Activated CD8-positive, alpha-beta memory T cell treated with anti-CD3 and anti-CD28 coated beads, Interleukin-2, amount 10 ng/mL, durations not matched to agents 7 days and 5 days (primary cell): ENCODE measurements at regions of chr20 and their contacts with region 1.

Region 1: GRCh38 chr20:35463455-35464300 is 8.3 kb downstream of the CEP250 start:
- DNase-seq: peak; percentile 73
- ATAC-seq: peak; percentile 92
- H3K4me3 Mint-ChIP-seq: no peak overlapping the region
- H3K27ac Mint-ChIP-seq: peak overlapping the region; percentile 61
- H3K4me1 Mint-ChIP-seq: peaks cover 10% of the 10 kb centered on the region
- H3K27me3 Mint-ChIP-seq: no peaks in the 10 kb centered on the region

Region 2: GRCh38 chr20:35474303-35474871 is 10.7 kb after region 1 on chr20:
- CTCF ChIA-PET with region 1: interaction called, 21 read pairs
- DNase-seq: no peak
- ATAC-seq: no peak
- H3K4me3 Mint-ChIP-seq: no peak overlapping the region
- H3K27ac Mint-ChIP-seq: no peak overlapping the region
- H3K4me1 Mint-ChIP-seq: no peaks in the 10 kb centered on the region
- H3K27me3 Mint-ChIP-seq: no peaks in the 10 kb centered on the region

Region 3: DNA sequence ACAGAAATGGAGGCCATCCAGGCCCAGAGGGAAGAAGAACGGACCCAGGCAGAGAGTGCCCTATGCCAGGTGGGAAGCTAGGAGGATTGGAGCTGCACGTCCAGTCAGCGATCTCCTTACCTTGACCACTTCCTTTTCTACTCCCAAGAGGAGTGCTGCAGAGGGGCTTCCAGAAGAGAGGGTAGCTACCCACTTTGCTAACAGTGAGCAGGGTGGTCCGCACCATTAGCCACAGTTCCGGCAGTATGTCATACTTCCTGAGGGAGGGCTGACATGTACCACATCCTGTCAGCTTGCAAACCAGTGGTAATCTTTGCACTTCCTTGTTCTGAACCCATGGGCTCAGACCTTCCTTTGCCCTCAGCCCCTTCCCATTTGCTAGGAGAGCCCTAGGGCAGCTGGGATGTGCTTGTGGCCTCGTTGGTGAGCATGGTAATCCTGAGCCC is 27.1 kb after region 1 on chr20:
- CTCF ChIA-PET with region 1: interaction called, 14 read pairs
- DNase-seq: peak; percentile 91
- ATAC-seq: peak; percentile 95
- H3K4me3 Mint-ChIP-seq: peak overlapping the region; percentile 93
- H3K27ac Mint-ChIP-seq: peak overlapping the region; percentile 99
- H3K4me1 Mint-ChIP-seq: peaks cover 46% of the 10 kb centered on the region
- H3K27me3 Mint-ChIP-seq: no peaks in the 10 kb centered on the region